ENCODE measurements at regions of chr6 and their contacts with region 1.

Region 1: GRCh38 chr6:95091823-95092436 is 485.4 kb upstream of the MANEA start:
- DNase-seq: no peak
- ATAC-seq: peak; percentile 78
- H3K4me3 Mint-ChIP-seq: no peak overlapping the region
- H3K27ac Mint-ChIP-seq: no peak overlapping the region
- H3K4me1 Mint-ChIP-seq: peaks cover 3% of the 10 kb centered on the region; the same call in 1 of the 2 replicates
- H3K27me3 Mint-ChIP-seq: no peaks in the 10 kb centered on the region
- CTCF ChIP-seq: peak; percentile 55

Region 2: DNA sequence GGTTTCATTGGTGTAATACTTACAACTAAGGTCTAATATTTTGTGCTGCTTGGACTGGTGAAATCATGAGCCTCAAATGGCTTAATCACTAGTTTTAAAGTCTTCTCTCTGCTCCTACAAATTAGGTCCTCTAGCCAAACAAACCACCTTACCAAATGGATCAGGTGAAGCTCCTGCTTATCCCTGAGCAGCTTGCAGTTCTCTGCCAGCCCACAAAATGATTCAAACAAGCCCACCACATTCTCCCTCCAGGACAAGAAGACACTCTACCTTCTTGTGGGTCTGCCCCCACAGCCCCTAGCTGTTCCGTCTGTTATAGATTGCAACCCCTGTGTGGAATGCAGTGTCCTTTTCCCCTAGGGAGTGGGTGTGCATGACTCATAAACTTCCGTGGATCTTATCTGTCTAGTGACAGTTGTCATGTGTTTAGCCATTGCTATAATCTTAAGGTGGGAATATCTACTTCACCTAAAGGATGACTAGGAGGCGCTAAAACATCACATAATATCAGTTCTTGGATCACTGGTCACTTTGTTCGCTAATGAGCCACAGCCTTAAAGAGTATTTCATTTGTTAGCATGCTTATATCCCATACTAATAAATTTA is 455.0 kb before region 1 on chr6:
- CTCF ChIA-PET with region 1: interaction called, 10 read pairs
- POLR2A ChIA-PET with region 1: no interaction called
- DNase-seq: no peak
- ATAC-seq: peak; percentile 87
- H3K4me3 Mint-ChIP-seq: no peak overlapping the region
- H3K27ac Mint-ChIP-seq: no peak overlapping the region
- H3K4me1 Mint-ChIP-seq: peaks cover 8% of the 10 kb centered on the region
- H3K27me3 Mint-ChIP-seq: peaks cover 17% of the 10 kb centered on the region
- CTCF ChIP-seq: peak; percentile 22; the same call in 1 of the 2 replicates

Measured in WTC11 (cell line).